Calu3 (cell line): ENCODE measurements at regions of chr4 and their contacts with region 1.

Region 1: GRCh38 chr4:41990365-41991111 is at the start of gene SLC30A9:
- DNase-seq: peak; percentile 85
- H3K4me3 Mint-ChIP-seq: peak within 1 kb of the TSS; percentile 88
- H3K27ac Mint-ChIP-seq: peak within 1 kb of the TSS; percentile 98
- H3K4me1 Mint-ChIP-seq: no peaks in the 10 kb centered on the region
- H3K27me3 Mint-ChIP-seq: no peaks in the 10 kb centered on the region
- CTCF ChIP-seq: no peak
- total RNA-seq, gene SLC30A9: 43.4 and 45.5 TPM in 2 replicates

Region 2: DNA sequence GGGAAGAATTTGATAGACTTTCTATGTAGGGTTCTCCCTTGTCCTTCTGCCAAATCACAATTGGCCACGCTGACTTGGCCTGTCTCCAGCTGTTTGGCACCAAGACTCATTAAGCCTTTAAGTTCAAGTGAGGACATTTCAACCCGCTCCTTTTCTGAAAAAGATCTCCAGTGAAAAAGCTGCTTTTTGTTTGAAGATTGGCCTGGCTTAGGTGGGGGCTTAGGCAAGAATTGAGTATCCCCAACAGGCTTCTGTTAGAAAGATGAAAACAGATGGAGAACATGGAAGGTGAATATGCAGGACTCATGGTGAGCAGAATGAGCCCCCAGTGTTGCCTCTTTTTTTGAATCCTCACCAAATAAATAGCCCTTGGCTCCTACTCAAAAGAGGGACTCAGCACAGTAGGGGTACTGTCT is 481.1 kb before region 1 on chr4:
- CTCF ChIA-PET with region 1: no interaction called
- intact Hi-C with region 1: no loop called
- DNase-seq: no peak
- H3K4me3 Mint-ChIP-seq: no peak overlapping the region
- H3K27ac Mint-ChIP-seq: no peak overlapping the region
- H3K4me1 Mint-ChIP-seq: peaks cover 50% of the 10 kb centered on the region
- H3K27me3 Mint-ChIP-seq: no peaks in the 10 kb centered on the region
- CTCF ChIP-seq: no peak

Region 3: DNA sequence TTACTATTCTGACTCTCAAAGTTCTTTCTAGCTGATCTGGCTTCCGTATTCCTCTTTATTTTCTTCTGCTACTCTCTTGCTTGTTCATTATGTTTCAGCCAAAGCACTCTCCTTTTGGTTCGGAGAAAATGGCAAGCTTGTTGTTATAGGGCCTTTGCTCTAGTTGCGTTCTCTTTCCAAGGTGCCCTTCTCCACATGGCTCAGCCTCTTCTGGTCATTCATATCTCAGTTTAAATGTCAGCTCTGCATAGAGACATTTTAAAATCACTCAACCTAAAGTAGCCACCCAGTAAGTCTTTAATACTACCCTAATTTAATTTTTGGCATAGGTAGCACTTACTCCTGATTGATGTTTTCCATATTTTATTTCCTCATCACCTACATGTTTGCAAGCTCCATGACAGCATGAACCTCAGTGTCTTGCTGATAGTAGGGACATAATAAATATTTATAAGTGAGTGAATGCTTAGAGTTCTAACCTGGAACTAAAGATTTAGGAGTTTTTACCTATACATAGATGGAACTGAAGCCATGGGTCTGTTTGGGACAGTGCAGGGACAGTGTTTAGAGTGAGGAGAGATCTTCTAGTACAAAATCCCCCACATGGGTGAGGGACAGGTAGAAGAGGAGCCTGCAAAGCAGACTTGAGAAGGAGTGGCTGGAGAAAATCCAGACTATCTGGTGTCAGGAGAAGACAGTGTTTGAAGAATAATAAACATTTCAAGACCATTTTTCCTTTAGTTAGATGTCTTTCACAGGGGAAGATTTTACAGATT is 17.7 kb after region 1 on chr4:
- CTCF ChIA-PET with region 1: interaction called, 13 read pairs
- intact Hi-C with region 1: no loop called
- DNase-seq: no peak
- H3K4me3 Mint-ChIP-seq: no peak overlapping the region
- H3K27ac Mint-ChIP-seq: no peak overlapping the region
- H3K4me1 Mint-ChIP-seq: no peaks in the 10 kb centered on the region
- H3K27me3 Mint-ChIP-seq: no peaks in the 10 kb centered on the region
- CTCF ChIP-seq: no peak